Cardiac septum (tissue), 1 donor: ENCODE measurements at regions of chr7 and their contacts with region 1.

Region 1: DNA sequence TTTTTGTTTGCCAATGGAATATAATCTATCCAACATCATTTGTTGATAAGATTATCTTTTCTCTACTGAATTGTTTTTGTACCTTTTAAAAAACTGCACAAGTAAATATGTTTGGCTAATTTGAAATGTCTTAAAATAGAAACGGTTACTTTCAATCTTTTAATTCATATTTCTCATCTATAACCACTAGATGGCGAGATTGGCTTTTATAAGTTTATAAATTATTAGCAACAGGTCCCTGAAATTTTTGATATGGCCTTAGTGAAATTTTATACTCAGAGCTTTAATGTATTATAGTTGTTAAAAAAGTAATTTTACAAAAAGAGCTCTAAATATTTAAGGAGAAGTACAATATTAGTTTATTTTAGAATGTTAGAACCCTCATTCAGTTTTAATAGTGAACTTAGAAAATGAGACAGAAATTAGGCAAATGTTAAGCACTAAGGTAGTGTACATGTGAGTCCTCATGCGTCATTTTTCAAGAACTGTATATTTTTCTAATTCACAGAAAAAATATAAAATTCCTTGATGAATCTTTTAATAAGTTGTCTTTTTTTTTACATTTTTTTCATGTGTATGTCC is 592.5 kb downstream of the ARL4A start:
- DNase-seq: no peak

Region 2: DNA sequence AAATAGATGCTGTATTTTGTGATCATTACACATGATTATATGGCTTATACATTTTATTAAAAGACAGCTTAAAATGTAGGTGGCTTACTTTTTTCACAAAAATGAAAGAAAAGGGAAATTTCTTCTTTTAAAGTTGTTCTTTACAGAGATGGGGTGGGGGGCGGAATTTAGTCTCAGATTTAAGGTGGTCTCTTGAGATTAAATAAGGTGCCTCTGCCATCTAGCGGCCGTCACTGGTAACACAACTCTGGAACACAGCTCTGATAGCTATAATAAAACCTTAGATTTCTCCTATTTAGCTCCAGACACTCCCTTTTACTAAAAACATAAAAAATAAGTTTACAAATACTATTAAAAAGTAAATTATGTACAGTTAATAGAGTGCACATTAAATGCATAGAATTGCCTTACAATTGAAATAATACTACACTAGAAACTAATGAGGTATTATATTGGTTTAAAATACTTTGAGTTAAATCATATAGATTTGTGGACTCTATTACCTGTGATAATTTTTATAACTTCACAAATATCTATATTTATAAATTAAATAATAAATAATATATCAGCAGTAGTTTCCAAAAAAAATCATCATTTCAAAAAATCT is 1411.8 kb after region 1 on chr7:
- intact Hi-C with region 1: loop called (anchors 2 kb)
- DNase-seq: no peak